PC-9 (cell line): ENCODE measurements at regions of chr16 and their contacts with region 1.

Region 1: GRCh38 chr16:57167953-57168352 is 17.9 kb downstream of the PSME3IP1 start:
- DNase-seq: peak in 1 of 2 experiments; percentile 51
- H3K4me3 ChIP-seq: no peak overlapping the region
- H3K27ac ChIP-seq: no peak overlapping the region
- H3K4me1 ChIP-seq: no peaks in the 10 kb centered on the region
- H3K27me3 ChIP-seq: no peaks in the 10 kb centered on the region
- CTCF ChIP-seq: peak; percentile 73

Region 2: GRCh38 chr16:56625140-56625942 is 542.6 kb before region 1 on chr16 and contains the start of gene MT1E:
- CTCF ChIA-PET with region 1: no interaction called
- POLR2A ChIA-PET with region 1: interaction called, 15 read pairs
- intact Hi-C with region 1: no loop called
- DNase-seq: no peak
- H3K4me3 ChIP-seq: no peak within 1 kb of the TSS
- H3K27ac ChIP-seq: peak within 1 kb of the TSS; percentile 62; the same call in 1 of the 2 replicates
- H3K4me1 ChIP-seq: peaks cover 17% of the 10 kb centered on the region
- H3K27me3 ChIP-seq: no peaks in the 10 kb centered on the region
- CTCF ChIP-seq: no peak
- total RNA-seq, gene MT1E: 22.0 and 22.2 TPM in 2 replicates

Region 3: GRCh38 chr16:56789360-56789759 is 378.6 kb before region 1 on chr16:
- CTCF ChIA-PET with region 1: no interaction called
- POLR2A ChIA-PET with region 1: no interaction called
- intact Hi-C with region 1: loop called (anchors 10 kb)
- DNase-seq: peak; percentile 55
- H3K4me3 ChIP-seq: no peak overlapping the region
- H3K27ac ChIP-seq: no peak overlapping the region
- H3K4me1 ChIP-seq: no peaks in the 10 kb centered on the region
- H3K27me3 ChIP-seq: no peaks in the 10 kb centered on the region
- CTCF ChIP-seq: peak; percentile 59

Region 4: GRCh38 chr16:56944954-56945839 is 222.8 kb before region 1 on chr16:
- CTCF ChIA-PET with region 1: no interaction called
- POLR2A ChIA-PET with region 1: no interaction called
- intact Hi-C with region 1: loop called (anchors 5 kb)
- DNase-seq: peak; percentile 64 to 74
- H3K4me3 ChIP-seq: no peak overlapping the region
- H3K27ac ChIP-seq: peak overlapping the region; percentile 57
- H3K4me1 ChIP-seq: peaks cover 24% of the 10 kb centered on the region
- H3K27me3 ChIP-seq: no peaks in the 10 kb centered on the region
- CTCF ChIP-seq: no peak

Region 5: DNA sequence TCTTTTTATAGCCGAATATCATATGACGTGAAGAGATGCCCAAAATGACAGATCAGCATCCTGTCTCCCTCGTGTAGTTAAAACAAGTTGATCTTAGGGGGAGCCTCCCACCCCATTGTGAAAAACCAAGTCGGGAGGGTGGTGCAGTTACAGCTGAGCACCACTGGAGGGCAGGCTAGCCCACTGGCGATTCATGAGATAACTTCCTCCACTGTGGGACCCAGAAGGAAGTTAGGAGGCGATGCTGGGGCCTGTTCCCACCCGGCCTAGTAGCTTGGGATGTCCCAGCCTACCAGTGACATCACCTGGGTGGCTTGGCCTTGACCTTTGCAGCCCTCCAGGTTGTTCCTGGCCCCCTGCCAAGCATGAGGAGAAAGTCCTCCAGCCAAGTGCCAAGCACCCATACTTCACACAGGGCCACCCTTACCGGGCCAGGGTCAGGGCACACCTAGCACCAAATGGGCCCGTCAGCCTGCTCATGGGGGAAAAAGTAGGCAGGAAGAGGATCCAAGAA is 83.6 kb before region 1 on chr16:
- CTCF ChIA-PET with region 1: no interaction called
- POLR2A ChIA-PET with region 1: no interaction called
- intact Hi-C with region 1: loop called (anchors 2 kb)
- DNase-seq: peak; percentile 47 to 59
- H3K4me3 ChIP-seq: no peak overlapping the region
- H3K27ac ChIP-seq: no peak overlapping the region
- H3K4me1 ChIP-seq: no peaks in the 10 kb centered on the region
- H3K27me3 ChIP-seq: no peaks in the 10 kb centered on the region
- CTCF ChIP-seq: peak; percentile 98